Thyroid gland (tissue), 4 donors: ENCODE measurements at regions of chr16 and their contacts with region 1.

Region 1: GRCh38 chr16:49489686-49490320 is 116.2 kb downstream of the C16orf78 start:
- DNase-seq: no peak
- H3K4me3 ChIP-seq: no peak overlapping the region
- H3K27ac ChIP-seq: no peak overlapping the region
- H3K4me1 ChIP-seq: peaks cover 4 to 11% of the 10 kb centered on the region in 2 donors
- H3K27me3 ChIP-seq: no peaks in the 10 kb centered on the region
- CTCF ChIP-seq: no peak
- POLR2A ChIP-seq: no peak

Region 2: GRCh38 chr16:49716339-49716934 is 226.6 kb after region 1 on chr16:
- intact Hi-C with region 1: no loop called
- DNase-seq: no peak
- H3K4me3 ChIP-seq: no peak overlapping the region
- H3K27ac ChIP-seq: no peak overlapping the region
- H3K4me1 ChIP-seq: no peaks in the 10 kb centered on the region
- H3K27me3 ChIP-seq: no peaks in the 10 kb centered on the region
- CTCF ChIP-seq: no peak
- POLR2A ChIP-seq: no peak

Region 3: DNA sequence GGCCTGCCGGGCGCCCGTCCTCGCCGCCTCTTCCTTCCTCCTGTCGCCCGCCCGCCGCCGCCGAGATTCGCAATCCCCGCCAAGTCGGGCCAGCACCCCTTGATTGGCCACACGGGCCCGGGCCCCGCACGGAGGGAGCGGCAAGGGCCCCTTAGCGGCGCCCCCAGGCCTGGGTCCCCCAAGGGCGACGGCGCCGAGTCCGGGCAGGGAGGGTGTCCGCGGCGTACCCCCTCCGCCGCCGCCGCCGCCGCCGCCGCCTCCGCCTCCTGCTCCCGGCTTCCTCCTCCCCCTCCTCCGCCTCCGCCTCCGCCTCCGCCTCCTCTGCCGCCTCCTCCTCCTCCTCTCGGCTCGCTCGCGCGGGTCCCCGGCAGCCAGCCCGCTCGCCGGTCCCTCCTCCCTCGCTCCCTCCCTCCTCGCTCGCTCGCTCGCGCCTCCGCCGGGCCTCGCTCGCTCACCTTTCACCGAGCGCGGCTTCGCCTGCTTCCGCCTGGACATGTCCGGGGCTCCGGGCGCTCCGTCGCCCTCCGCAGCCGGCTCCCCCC is 365.5 kb after region 1 on chr16:
- intact Hi-C with region 1: loop called (anchors 5 kb)
- DNase-seq: peak; percentile 86 to 88
- H3K4me3 ChIP-seq: peak overlapping the region; percentile 34 to 80 (median 69)
- H3K27ac ChIP-seq: peak overlapping the region; percentile 58 to 89 (median 83)
- H3K4me1 ChIP-seq: peaks cover 27 to 32% of the 10 kb centered on the region in 2 donors
- H3K27me3 ChIP-seq: no peaks in the 10 kb centered on the region
- CTCF ChIP-seq: no peak
- POLR2A ChIP-seq: peak in 1 of 2 donors; percentile 82